Activated B cell treated with CpG ODN at 0.5 μM for 24 hours (primary cell): ENCODE measurements at regions of chr21 and their contacts with region 1.

Region 1: GRCh38 chr21:44338971-44339910 is at the start of gene CFAP410:
- DNase-seq: peak; percentile 97
- ATAC-seq: peak; percentile 86
- H3K4me3 Mint-ChIP-seq: peak within 1 kb of the TSS; percentile 89
- H3K27ac Mint-ChIP-seq: peak within 1 kb of the TSS; percentile 93
- H3K4me1 Mint-ChIP-seq: peaks cover 24% of the 10 kb centered on the region
- H3K27me3 Mint-ChIP-seq: no peaks in the 10 kb centered on the region
- CTCF ChIP-seq: no peak
- total RNA-seq, gene CFAP410: 50.6 and 62.3 TPM in 2 replicates

Region 2: DNA sequence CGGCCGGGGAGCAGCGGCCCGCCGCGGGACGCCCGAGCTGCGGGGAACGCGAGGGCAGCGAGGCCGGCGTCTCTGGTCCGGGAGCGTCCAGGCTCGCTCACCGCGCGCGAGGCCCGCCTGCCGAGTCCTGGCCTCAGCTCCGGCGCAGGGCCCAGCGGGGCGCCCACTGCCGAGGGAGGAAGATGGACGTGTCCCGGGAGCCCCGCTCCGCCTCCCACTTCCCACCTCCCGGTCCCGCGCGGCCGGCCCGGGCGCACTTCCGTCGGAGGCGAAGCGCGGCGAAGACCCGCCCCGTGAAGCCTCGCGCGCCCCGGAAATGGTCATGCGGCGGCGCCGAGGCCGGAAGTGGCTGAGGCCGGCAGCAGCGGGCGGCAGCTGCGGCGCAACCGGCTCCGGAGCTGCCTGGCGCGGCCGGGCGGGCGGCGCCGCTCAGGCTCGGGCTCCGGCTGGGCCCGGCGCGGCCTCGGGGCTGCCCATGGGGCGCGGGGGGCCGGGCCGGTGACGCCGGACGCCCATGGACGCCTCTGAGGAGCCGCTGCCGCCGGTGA is 327.2 kb before region 1 on chr21 and contains the start of gene TRAPPC10:
- CTCF ChIA-PET with region 1: no interaction called
- POLR2A ChIA-PET with region 1: interaction called, 3 read pairs
- intact Hi-C with region 1: loop called (anchors 1 kb)
- DNase-seq: peak; percentile 83
- ATAC-seq: peak; percentile 66
- H3K4me3 Mint-ChIP-seq: peak within 1 kb of the TSS; percentile 87
- H3K27ac Mint-ChIP-seq: peak within 1 kb of the TSS; percentile 86
- H3K4me1 Mint-ChIP-seq: peaks cover 43% of the 10 kb centered on the region
- H3K27me3 Mint-ChIP-seq: no peaks in the 10 kb centered on the region
- CTCF ChIP-seq: no peak
- total RNA-seq, gene TRAPPC10: 77.8 and 96.0 TPM in 2 replicates

Region 3: DNA sequence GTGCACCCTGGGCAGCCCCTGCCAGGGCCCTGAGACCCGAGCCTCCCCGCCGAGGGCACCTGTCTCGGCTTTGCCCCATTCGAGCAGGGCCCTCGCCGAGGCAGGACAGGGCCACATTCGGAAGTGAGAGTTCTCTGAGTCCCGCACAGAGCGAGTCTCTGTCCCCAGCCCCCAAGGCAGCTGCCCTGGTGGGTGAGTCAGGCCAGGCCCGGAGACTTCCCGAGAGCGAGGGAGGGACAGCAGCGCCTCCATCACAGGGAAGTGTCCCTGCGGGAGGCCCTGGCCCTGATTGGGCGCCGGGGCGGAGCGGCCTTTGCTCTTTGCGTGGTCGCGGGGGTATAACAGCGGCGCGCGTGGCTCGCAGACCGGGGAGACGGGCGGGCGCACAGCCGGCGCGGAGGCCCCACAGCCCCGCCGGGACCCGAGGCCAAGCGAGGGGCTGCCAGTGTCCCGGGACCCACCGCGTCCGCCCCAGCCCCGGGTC is 53.7 kb before region 1 on chr21 and contains the start of gene AIRE:
- CTCF ChIA-PET with region 1: no interaction called
- POLR2A ChIA-PET with region 1: no interaction called
- intact Hi-C with region 1: no loop called
- DNase-seq: no peak
- ATAC-seq: no peak
- H3K4me3 Mint-ChIP-seq: no peak within 1 kb of the TSS
- H3K27ac Mint-ChIP-seq: no peak within 1 kb of the TSS
- H3K4me1 Mint-ChIP-seq: peaks cover 14% of the 10 kb centered on the region
- H3K27me3 Mint-ChIP-seq: peaks cover 2% of the 10 kb centered on the region
- CTCF ChIP-seq: no peak
- total RNA-seq, gene AIRE: 0.10 TPM in 1 of 2 replicates, not detected in the other

Region 4: GRCh38 chr21:44353191-44353970 is 14.1 kb after region 1 on chr21 and contains the start of gene TRPM2:
- CTCF ChIA-PET with region 1: no interaction called
- POLR2A ChIA-PET with region 1: interaction called, 19 read pairs
- intact Hi-C with region 1: loop called (anchors 1 kb)
- DNase-seq: no peak
- ATAC-seq: peak; percentile 65
- H3K4me3 Mint-ChIP-seq: peak within 1 kb of the TSS; percentile 78
- H3K27ac Mint-ChIP-seq: peak within 1 kb of the TSS; percentile 75
- H3K4me1 Mint-ChIP-seq: peaks cover 48% of the 10 kb centered on the region
- H3K27me3 Mint-ChIP-seq: peaks cover 14% of the 10 kb centered on the region
- CTCF ChIP-seq: no peak
- total RNA-seq, gene TRPM2: 2.4 and 3.9 TPM in 2 replicates

Region 5: DNA sequence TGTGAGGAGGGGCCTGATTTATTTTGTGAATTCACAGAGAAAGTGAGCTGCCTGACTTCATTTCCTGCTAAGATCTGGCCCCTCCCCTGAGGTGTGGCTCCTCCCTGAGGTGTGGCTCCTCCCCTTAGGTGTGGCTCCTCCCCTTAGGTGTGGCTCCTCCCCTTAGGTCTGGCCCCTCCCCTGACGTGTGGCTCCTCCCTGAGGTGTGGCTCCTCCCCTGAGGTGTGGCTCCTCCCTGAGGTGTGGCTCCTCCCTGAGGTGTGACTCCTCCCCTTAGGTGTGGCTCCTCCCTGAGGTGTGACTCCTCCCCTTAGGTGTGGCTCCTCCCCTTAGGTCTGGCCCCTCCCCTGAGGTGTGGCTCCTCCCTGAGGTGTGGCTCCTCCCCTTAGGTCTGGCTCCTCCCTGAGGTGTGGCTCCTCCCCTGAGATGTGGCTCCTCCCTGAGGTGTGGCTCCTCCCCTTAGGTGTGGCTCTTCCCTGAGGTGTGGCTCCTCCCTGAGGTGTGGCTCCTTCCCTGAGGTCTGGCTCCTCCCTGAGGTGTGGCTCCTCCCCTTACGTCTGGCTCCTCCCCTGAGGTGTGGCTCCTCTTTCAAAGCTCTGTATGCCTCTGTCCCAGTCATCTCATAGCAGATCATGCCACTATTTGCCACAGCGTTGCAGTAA is 89.2 kb after region 1 on chr21:
- CTCF ChIA-PET with region 1: no interaction called
- POLR2A ChIA-PET with region 1: no interaction called
- intact Hi-C with region 1: loop called (anchors 1 kb)
- DNase-seq: peak; percentile 30
- ATAC-seq: peak; percentile 62
- H3K4me3 Mint-ChIP-seq: no peak overlapping the region
- H3K27ac Mint-ChIP-seq: no peak overlapping the region
- H3K4me1 Mint-ChIP-seq: peaks cover 5% of the 10 kb centered on the region
- H3K27me3 Mint-ChIP-seq: no peaks in the 10 kb centered on the region
- CTCF ChIP-seq: no peak

Region 6: DNA sequence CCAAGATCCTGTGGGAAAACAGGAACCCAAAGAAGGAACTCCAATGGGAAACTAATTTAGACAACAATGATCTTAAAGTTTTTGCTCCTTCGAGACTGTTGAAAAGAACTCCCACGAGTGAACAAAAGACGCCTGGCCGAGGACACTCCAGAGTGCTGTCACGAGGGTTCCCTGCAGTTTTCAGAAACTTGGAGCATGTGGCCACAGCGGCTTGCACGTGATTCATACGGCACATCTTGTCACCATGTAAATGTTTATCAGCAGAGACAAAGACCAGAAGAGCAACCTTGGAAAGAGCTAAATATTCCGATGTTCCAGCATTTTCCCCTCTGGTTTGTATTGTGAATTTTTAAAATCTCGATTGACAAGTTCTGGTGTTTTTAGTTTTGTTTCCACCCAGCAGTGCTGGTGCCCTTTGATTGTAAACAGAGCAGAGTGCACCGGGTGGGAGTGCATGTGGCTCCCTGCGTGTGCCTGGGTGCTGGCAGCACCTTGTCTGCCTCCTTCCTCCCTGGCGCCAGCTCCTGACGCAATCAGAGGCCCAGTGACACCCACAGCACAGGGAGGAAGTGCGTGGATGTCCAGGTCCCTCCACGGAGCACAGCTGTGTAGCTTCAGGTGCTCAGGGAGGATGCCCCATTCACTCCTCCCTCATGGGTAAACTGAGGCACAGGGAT is 139.0 kb after region 1 on chr21:
- CTCF ChIA-PET with region 1: no interaction called
- POLR2A ChIA-PET with region 1: no interaction called
- intact Hi-C with region 1: loop called (anchors 1 kb)
- DNase-seq: no peak
- ATAC-seq: no peak
- H3K4me3 Mint-ChIP-seq: no peak overlapping the region
- H3K27ac Mint-ChIP-seq: no peak overlapping the region
- H3K4me1 Mint-ChIP-seq: peaks cover 4% of the 10 kb centered on the region
- H3K27me3 Mint-ChIP-seq: peaks cover 4% of the 10 kb centered on the region
- CTCF ChIP-seq: no peak

Region 7: DNA sequence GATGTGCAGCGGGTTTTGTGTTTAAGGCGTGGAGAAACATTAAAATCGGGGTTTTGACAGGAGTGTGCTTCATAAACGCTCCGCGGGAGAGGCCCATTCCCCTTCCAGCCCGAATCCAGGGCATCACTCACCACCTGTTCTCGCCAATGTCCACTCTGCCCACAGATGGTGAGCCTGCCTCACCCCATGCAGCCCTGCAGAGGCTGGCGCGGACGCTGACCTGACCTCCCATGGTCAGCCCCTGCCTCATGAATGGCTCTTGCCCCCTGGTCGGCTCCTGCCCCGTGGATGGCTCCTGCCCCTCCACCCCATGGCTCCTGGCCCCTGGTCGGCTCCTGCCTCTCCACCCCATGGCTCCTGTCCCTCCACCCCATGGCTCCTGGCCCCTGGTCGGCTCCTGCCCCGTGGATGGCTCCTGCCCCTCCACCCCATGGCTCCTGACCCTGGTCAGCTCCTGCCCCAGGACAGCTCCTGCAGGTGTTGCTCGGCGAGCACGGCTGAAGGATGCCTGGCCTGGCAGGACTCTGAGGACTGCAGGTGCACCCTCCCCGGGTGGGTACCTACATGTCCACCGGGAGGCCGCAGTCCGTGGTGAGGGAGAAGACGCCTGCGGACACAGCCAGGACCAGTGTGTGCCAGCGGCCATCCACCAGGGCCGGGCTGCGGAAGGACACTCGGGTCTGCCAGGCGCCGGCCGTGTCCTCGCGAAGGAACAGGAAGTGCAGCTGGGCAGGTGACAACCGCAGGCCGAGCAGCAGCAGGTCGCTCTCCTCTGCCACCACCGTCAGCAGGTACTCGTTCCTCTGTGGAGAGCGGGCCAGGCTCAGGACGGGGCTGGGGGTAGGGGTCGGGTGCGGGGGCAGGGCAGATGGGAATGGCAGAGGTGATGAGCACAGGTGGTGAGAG is 194.1 kb after region 1 on chr21:
- CTCF ChIA-PET with region 1: no interaction called
- POLR2A ChIA-PET with region 1: no interaction called
- intact Hi-C with region 1: no loop called
- DNase-seq: peak; percentile 9
- ATAC-seq: no peak
- H3K4me3 Mint-ChIP-seq: no peak overlapping the region
- H3K27ac Mint-ChIP-seq: no peak overlapping the region
- H3K4me1 Mint-ChIP-seq: no peaks in the 10 kb centered on the region
- H3K27me3 Mint-ChIP-seq: peaks cover 14% of the 10 kb centered on the region
- CTCF ChIP-seq: no peak

Region 8: GRCh38 chr21:44817506-44817880 is 478.3 kb after region 1 on chr21:
- CTCF ChIA-PET with region 1: no interaction called
- POLR2A ChIA-PET with region 1: no interaction called
- intact Hi-C with region 1: loop called (anchors 2 kb)
- DNase-seq: peak; percentile 89
- ATAC-seq: peak; percentile 93
- H3K4me3 Mint-ChIP-seq: peak overlapping the region; percentile 53
- H3K27ac Mint-ChIP-seq: no peak overlapping the region
- H3K4me1 Mint-ChIP-seq: peaks cover 12% of the 10 kb centered on the region
- H3K27me3 Mint-ChIP-seq: no peaks in the 10 kb centered on the region
- CTCF ChIP-seq: no peak